Tibial artery (tissue), 4 donors: ENCODE measurements at regions of chr22 and their contacts with region 1.

Region 1: DNA sequence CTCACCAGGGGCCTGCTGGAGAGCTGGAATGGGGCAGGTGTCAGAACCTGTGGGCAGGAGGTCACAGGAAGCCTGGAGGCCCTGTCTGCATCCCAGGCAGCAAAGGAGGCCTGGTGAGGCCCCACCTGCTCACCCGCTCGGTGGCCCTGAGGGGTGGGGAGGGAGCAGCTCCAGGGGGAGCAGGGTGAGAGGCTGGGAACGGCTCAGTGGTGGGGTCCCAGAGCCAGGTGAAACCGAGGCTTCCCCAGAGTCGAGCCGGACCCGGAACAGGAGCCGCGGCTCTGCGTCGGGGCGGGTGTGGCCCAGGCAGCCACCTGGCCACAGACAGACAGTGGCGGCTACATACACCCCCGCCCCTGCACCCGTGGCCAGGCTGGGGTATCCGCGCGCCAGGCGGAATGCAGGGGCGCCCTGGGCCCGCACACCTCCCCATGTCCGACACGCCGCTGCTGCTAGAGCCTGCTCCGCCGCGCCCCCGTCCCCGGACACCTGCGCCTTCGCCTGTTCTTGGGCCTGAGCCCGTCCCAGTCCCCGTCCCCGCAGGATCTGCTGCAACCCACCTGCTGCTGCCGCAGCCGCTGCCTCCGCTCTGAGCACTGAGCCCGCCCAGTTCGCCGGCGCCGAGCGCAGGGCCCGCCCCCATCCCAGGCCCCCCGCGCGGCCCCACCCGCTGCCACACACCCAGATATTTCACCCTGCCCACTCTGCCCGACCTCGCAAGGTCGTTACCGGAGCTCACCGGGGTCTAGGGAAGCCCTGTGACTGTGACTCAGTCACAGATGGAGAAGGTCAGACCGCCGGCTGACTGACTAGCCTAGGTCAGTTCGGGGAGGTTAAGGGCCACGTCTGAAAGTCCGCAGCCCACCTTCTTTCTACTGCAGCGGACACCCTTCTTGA is at the start of gene SLC7A4:
- DNase-seq: no peak
- H3K4me3 ChIP-seq: peak within 1 kb of the TSS; percentile 30 to 34
- H3K27ac ChIP-seq: no peak within 1 kb of the TSS
- H3K4me1 ChIP-seq: peaks cover 0 to 14% (median 10%) of the 10 kb centered on the region in 4 donors
- H3K27me3 ChIP-seq: peaks cover 0 to 58% of the 10 kb centered on the region in 2 donors
- CTCF ChIP-seq: no peak

Region 2: DNA sequence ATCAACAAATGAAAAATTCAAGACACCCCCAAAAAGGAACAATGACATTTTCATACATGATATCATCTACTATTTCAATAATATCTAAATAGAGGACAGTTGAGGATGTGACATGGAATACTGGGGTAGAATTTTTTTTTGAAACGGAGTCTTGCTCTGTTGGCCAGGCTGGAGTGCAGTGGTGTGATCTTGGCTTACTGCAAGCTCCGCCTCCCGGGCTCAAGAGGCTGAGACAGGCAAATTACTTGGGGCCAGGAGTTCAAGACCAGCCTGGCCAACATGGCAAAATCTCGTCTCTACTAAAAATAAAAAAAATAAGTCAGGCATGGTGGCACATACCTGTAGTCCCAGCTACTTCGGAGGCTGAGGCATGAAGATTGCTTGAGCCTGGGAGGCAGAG is 54.9 kb after region 1 on chr22:
- intact Hi-C with region 1: no loop called
- DNase-seq: no peak
- H3K4me3 ChIP-seq: no peak overlapping the region
- H3K27ac ChIP-seq: no peak overlapping the region
- H3K4me1 ChIP-seq: no peaks in the 10 kb centered on the region
- H3K27me3 ChIP-seq: peaks cover 0 to 9% of the 10 kb centered on the region in 2 donors
- CTCF ChIP-seq: no peak

Region 3: GRCh38 chr22:21966617-21967516 is 934.6 kb after region 1 on chr22:
- intact Hi-C with region 1: loop called (anchors 5 kb)
- DNase-seq: no peak
- H3K4me3 ChIP-seq: no peak overlapping the region
- H3K27ac ChIP-seq: no peak overlapping the region
- H3K4me1 ChIP-seq: no peaks in the 10 kb centered on the region
- H3K27me3 ChIP-seq: no peaks in the 10 kb centered on the region
- CTCF ChIP-seq: no peak